Activated naive CD4-positive, alpha-beta T cell treated with anti-CD3 and anti-CD28 coated beads for 36 hours (primary cell): ENCODE measurements at regions of chr4 and their contacts with region 1.

Region 1: GRCh38 chr4:184733654-184734524 is at the start of gene CENPU:
- DNase-seq: peak; percentile 97
- H3K4me3 Mint-ChIP-seq: peak within 1 kb of the TSS; percentile 97
- H3K27ac Mint-ChIP-seq: peak within 1 kb of the TSS; percentile 86
- H3K4me1 Mint-ChIP-seq: peaks cover 19% of the 10 kb centered on the region
- H3K27me3 Mint-ChIP-seq: no peaks in the 10 kb centered on the region
- total RNA-seq, gene CENPU: 78.7 to 91.5 TPM

Region 2: GRCh38 chr4:184237612-184238011 is 496.3 kb before region 1 on chr4:
- CTCF ChIA-PET with region 1: no interaction called
- intact Hi-C with region 1: loop called (anchors 1 kb)
- DNase-seq: peak; percentile 84
- H3K4me3 Mint-ChIP-seq: peak overlapping the region; percentile 32
- H3K27ac Mint-ChIP-seq: peak overlapping the region; percentile 93
- H3K4me1 Mint-ChIP-seq: peaks cover 40% of the 10 kb centered on the region
- H3K27me3 Mint-ChIP-seq: no peaks in the 10 kb centered on the region

Region 3: GRCh38 chr4:184453365-184454160 is 280.3 kb before region 1 on chr4:
- CTCF ChIA-PET with region 1: no interaction called
- intact Hi-C with region 1: loop called (anchors 5 kb)
- DNase-seq: peak; percentile 69
- H3K4me3 Mint-ChIP-seq: peak overlapping the region; percentile 65
- H3K27ac Mint-ChIP-seq: peak overlapping the region; percentile 86
- H3K4me1 Mint-ChIP-seq: peaks cover 69% of the 10 kb centered on the region
- H3K27me3 Mint-ChIP-seq: no peaks in the 10 kb centered on the region

Region 4: DNA sequence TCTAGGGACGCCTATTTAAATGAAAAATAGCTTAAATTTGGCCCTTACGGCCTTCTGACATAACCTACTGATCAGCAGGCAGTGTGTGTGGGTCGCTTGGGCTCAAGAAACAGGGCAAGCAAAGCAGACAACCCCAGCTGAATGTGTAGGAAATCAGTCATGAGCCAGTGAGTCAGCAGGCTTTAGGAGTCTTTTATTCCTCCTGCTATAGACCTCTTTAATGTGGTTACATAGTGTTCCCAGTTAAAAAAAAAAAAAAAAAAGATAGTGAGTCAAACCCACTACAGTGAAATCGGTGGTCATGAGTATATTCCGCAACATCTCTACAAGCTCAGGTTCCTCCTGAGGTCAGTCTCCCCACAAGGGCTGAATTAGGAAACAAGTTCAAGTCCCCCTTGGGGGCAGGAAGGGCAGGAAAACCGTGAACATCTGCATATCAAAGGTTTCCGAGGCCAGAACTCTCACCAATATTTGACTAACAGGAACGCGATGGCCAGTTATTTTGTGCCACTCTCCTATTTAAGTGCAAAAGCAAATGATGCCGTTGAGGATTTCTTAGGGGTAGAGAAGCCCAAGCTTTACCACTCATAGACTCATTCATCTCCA is 59.2 kb after region 1 on chr4:
- CTCF ChIA-PET with region 1: no interaction called
- intact Hi-C with region 1: loop called (anchors 1 kb)
- DNase-seq: peak; percentile 60
- H3K4me3 Mint-ChIP-seq: no peak overlapping the region
- H3K27ac Mint-ChIP-seq: no peak overlapping the region
- H3K4me1 Mint-ChIP-seq: peaks cover 22% of the 10 kb centered on the region
- H3K27me3 Mint-ChIP-seq: peaks cover 2% of the 10 kb centered on the region

Region 5: GRCh38 chr4:185142912-185143595 is 409.2 kb after region 1 on chr4 and contains the start of gene SLC25A4:
- CTCF ChIA-PET with region 1: no interaction called
- intact Hi-C with region 1: loop called (anchors 1 kb)
- DNase-seq: peak; percentile 87
- H3K4me3 Mint-ChIP-seq: peak within 1 kb of the TSS; percentile 83
- H3K27ac Mint-ChIP-seq: no peak within 1 kb of the TSS
- H3K4me1 Mint-ChIP-seq: peaks cover 13% of the 10 kb centered on the region
- H3K27me3 Mint-ChIP-seq: peaks cover 11% of the 10 kb centered on the region
- total RNA-seq, gene SLC25A4: 4.3 to 5.0 TPM

Region 6: DNA sequence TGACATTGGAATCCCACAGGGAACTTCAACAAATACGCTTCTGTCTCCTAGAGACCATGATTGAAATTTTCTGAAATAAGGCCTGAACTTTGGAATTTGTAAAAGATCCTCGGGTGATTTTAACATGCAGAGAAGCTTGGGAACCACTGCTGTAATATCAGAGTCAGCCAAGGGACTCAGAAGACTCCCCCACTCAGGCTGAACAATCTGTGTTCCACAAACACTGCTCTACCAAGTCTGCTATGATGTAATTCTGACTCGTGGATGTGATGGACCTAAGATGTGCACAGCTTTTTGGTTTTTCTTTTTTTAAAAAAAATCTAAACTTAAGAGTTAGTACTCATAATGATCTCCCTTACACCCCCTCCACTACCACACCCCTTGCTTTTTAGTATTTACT is 635.8 kb after region 1 on chr4:
- CTCF ChIA-PET with region 1: no interaction called
- intact Hi-C with region 1: no loop called
- DNase-seq: no peak
- H3K4me3 Mint-ChIP-seq: no peak overlapping the region
- H3K27ac Mint-ChIP-seq: no peak overlapping the region
- H3K4me1 Mint-ChIP-seq: no peaks in the 10 kb centered on the region
- H3K27me3 Mint-ChIP-seq: no peaks in the 10 kb centered on the region